ENCODE measurements at regions of chr4 and their contacts with region 1.

Region 1: GRCh38 chr4:2745981-2746806 is 9.9 kb downstream of the TNIP2 start:
- DNase-seq: peak; percentile 97
- H3K4me3 Mint-ChIP-seq: peak overlapping the region; percentile 81
- H3K27ac Mint-ChIP-seq: peak overlapping the region; percentile 94
- H3K4me1 Mint-ChIP-seq: peaks cover 60% of the 10 kb centered on the region
- H3K27me3 Mint-ChIP-seq: no peaks in the 10 kb centered on the region

Region 2: GRCh38 chr4:1693129-1693896 is 1052.9 kb before region 1 on chr4:
- intact Hi-C with region 1: no loop called
- DNase-seq: peak; percentile 93
- H3K4me3 Mint-ChIP-seq: no peak overlapping the region
- H3K27ac Mint-ChIP-seq: peak overlapping the region; percentile 39
- H3K4me1 Mint-ChIP-seq: peaks cover 7% of the 10 kb centered on the region
- H3K27me3 Mint-ChIP-seq: no peaks in the 10 kb centered on the region

Region 3: DNA sequence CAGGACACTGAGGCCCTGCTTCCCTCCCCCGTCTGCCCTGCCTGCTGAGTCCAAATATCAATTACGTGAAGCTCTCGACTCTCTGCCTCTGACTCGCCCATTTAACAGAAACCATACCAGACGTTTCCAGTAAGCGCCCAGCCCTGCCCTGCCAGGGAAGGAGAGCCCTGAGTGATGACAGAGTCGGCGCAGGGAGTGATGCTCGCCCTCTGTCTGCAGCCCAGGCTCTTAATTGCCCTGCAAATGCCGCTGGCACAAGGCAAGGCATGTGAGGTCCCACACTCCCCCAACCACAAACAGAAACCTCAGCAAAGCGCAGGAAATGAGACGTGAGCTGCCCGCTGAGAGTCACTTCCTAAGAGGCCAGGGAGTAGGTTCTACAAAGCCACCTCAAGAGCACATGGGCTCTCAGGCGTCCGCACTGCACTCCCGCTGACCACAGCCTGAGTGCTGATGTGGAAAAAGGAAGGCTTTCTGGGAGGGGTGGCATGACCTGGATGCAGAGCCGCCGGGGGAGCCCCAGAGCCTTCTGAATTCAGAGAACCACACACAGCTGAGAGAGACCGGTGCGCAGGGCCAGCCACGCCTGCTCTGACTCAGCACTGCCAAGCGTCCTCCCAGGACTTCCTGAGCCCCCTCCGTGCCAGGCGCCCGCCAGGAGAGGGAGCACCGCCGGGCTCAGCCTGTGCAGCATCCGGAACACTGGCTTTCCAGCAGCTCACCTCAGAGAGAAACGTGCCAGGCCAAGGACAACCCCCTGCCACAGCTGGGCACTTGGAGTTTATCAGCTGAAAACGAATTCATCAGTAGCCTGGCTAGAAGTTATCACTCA is 333.1 kb before region 1 on chr4:
- intact Hi-C with region 1: loop called (anchors 2 kb)
- DNase-seq: peak; percentile 97
- H3K4me3 Mint-ChIP-seq: peak overlapping the region; percentile 78
- H3K27ac Mint-ChIP-seq: peak overlapping the region; percentile 91
- H3K4me1 Mint-ChIP-seq: peaks cover 64% of the 10 kb centered on the region
- H3K27me3 Mint-ChIP-seq: peaks cover 23% of the 10 kb centered on the region

Region 4: DNA sequence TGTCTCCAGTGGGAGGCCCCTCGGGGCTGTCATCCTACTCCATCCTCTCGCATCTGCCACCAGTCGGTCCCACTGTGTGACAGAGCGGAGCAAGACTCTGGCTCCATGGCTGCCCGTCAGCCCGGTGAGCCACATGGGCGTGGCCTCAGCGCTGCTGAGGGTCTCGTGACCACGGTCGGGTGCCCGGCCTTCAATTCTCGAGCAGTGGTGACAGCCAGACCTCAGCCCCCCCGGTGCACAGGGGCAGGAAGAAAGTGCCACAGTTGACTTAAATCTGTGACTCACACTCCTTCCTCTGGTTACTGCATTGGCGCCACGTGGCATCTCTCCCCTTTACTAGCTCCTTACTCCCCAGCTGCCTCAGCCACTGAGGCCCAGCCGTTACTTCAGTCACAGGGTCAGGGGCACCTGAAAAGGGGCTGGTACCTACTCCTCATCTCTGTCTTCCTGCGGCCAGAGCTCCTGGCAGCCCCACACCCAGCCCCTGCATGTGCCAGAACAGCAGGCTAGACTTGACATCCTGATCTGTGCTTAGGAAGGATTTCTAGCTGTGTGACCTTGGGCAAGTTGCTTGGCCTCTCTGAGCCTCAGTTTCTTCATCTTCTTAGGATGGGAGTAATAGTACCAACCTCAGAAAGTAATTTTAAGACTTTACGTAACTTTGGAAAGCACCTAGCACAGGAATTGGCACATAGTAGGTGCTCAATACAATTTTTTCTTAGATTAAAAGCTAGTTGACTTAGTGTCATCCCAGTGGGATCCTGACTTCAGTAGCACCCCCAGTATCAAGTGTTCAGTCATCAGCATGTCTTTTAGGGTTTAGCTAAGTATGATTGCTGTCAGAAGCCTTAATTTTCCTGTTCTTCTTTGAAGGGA is 56.1 kb before region 1 on chr4:
- intact Hi-C with region 1: loop called (anchors 2 kb)
- DNase-seq: no peak
- H3K4me3 Mint-ChIP-seq: no peak overlapping the region
- H3K27ac Mint-ChIP-seq: peak overlapping the region; percentile 77
- H3K4me1 Mint-ChIP-seq: peaks cover 26% of the 10 kb centered on the region
- H3K27me3 Mint-ChIP-seq: no peaks in the 10 kb centered on the region

Region 5: DNA sequence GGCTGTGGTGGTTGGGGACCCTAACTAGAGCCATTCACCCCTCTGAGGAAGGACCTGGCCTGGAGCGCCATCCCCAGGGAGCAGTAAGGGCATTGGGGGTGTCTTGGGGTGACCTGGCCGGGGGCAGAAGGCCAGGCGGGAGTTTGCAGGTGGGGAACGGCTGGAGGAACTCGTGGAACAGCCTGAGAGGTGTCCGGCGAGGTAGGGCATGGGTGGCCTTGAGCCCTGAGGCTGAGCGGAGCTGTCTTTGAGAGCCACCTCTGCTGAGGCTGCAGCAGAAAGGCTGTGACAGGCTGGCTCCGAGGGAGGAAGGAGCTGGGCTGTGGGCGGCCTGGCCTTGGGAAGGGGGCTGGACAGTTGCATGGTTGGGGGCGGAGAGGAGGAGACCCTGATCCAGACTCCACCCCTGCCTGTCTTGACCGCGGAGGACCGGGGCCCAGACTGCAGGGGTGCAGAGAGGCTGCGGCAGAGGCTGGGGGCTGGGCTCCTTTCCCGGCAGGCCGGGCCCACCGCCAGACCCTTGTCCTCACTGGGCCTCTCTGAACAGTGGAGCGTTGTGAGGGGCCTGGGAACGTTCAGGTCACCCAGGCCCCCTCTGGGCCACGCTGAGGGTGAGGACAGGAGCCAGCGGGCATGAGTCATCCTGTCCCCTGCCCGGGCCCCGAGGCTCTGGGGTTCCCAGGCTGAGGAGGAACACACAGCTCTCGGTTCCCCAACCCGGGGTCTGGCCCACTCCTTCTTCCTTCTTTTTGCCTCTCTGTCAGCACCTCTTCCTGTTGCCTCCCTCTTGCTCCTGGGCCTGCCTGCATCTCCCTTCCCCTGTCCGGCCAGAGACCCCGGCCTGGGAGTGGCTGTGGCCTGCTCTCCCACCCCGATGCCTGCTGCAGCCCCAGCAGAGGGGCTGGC is 54.8 kb after region 1 on chr4:
- intact Hi-C with region 1: loop called (anchors 5 kb)
- DNase-seq: peak; percentile 67
- H3K4me3 Mint-ChIP-seq: peak overlapping the region; percentile 87
- H3K27ac Mint-ChIP-seq: peak overlapping the region; percentile 73
- H3K4me1 Mint-ChIP-seq: peaks cover 47% of the 10 kb centered on the region
- H3K27me3 Mint-ChIP-seq: no peaks in the 10 kb centered on the region

Region 6: GRCh38 chr4:2934813-2935761 is 188.9 kb after region 1 on chr4:
- intact Hi-C with region 1: loop called (anchors 1 kb)
- DNase-seq: peak; percentile 99
- H3K4me3 Mint-ChIP-seq: peak overlapping the region; percentile 90
- H3K27ac Mint-ChIP-seq: peak overlapping the region; percentile 93
- H3K4me1 Mint-ChIP-seq: peaks cover 42% of the 10 kb centered on the region
- H3K27me3 Mint-ChIP-seq: no peaks in the 10 kb centered on the region

Region 7: GRCh38 chr4:2963175-2963965 is 217.2 kb after region 1 on chr4 and contains the starts of genes GRK4 and NOP14:
- intact Hi-C with region 1: loop called (anchors 2 kb)
- DNase-seq: peak; percentile 99
- H3K4me3 Mint-ChIP-seq: peak within 1 kb of the TSS; percentile 87
- H3K27ac Mint-ChIP-seq: peak within 1 kb of the TSS; percentile 79
- H3K4me1 Mint-ChIP-seq: peaks cover 27% of the 10 kb centered on the region
- H3K27me3 Mint-ChIP-seq: no peaks in the 10 kb centered on the region
- total RNA-seq, gene GRK4: 4.6 and 5.3 TPM in 2 replicates
- total RNA-seq, gene NOP14: 132 and 141 TPM in 2 replicates

Region 8: DNA sequence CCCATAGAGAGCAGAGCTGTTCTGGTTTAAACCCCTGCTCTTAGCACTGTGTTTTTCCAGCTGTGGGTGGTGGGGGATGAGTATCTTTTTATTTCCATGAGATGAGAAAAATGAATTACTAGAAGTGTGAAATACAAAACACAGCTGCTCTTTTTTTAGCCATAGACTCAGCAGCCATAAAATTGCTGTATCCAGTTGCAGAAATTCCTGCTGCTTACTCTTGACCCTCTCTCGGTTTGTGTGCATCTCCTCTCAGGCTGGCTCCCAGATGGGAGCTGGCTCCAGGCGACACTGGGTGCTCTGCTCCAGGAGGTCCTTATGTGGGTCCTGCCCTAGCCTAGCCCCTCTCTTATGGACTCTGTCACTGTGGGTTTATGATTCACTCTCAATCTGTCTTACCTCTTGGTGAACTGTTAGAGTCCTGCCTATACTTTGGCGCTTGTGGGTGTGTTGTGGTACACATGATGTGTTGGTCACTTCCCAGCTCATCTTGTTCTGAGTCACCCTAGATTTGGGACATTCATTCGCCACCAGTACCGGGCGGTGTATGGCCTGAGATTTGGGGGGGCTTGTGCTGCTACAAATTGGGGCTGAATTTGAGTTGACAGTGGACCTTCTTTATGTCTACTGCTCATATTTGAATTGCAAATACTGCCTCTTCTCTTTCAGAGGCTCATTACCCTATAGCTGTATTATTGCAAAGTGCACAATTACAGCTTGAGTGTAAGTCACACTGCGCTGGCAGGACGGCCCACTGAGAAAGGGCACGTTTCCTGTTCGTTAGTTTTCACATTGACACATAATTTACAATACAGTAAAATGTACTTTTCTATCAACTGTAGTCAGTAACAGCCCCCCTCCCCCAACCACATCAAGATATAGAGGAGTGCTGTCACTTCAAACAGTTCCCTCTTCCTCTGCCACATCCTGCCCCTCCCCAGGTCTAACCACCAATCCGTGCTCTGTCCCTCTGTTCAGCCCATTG is 455.8 kb after region 1 on chr4:
- intact Hi-C with region 1: loop called (anchors 5 kb)
- DNase-seq: peak; percentile 94
- H3K4me3 Mint-ChIP-seq: peak overlapping the region; percentile 47
- H3K27ac Mint-ChIP-seq: peak overlapping the region; percentile 96
- H3K4me1 Mint-ChIP-seq: peaks cover 37% of the 10 kb centered on the region
- H3K27me3 Mint-ChIP-seq: no peaks in the 10 kb centered on the region

Measured in activated CD4-positive, alpha-beta T cell treated with anti-CD3 and anti-CD28 coated beads, Interleukin-2, amount 10 ng/mL, durations not matched to agents 24 days and 14 days (primary cell).